Dorsolateral prefrontal cortex (tissue), 120 donors: ENCODE measurements at regions of chr6 and their contacts with region 1.

Region 1: GRCh38 chr6:52517502-52518278 is 59.2 kb downstream of the TRAM2 start:
- DNase-seq: peak in 9 of 10 donors; percentile 50 to 95 (median 82)
- H3K4me3 ChIP-seq: peak overlapping the region in 36 of 59 donors; percentile 2 to 49 (median 24)
- H3K27ac ChIP-seq: peak overlapping the region; percentile 32 to 98 (median 84)
- H3K27me3 ChIP-seq: no peaks in the 10 kb centered on the region
- CTCF ChIP-seq: peak in 4 of 56 donors; percentile 10 to 30 (median 22)

Region 2: DNA sequence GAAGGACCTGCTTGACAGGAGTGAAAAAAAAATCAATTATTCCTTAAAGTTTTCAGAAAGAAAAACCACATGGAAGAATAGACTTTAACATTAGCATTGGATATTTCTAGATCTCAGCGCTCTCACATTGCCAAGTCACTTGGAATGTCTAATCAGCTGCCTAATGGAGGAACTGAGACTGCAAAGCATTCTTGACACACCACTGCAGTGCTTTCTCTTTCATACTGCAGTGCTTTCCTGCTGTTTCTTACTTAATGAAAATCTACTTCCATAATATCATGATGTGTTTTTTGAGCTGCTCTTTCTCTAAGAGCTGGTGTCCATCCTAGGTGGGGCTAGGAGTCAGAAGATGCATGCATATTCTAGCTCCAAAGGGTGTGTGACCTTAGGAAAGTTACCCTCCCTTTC is 212.7 kb before region 1 on chr6:
- intact Hi-C with region 1: no loop called
- DNase-seq: no peak
- H3K4me3 ChIP-seq: peak overlapping the region in 3 of 59 donors; percentile 6 to 12 (median 9)
- H3K27ac ChIP-seq: peak overlapping the region in 52 of 59 donors; percentile 1 to 84 (median 56)
- H3K27me3 ChIP-seq: no peaks in the 10 kb centered on the region
- CTCF ChIP-seq: no peak

Region 3: DNA sequence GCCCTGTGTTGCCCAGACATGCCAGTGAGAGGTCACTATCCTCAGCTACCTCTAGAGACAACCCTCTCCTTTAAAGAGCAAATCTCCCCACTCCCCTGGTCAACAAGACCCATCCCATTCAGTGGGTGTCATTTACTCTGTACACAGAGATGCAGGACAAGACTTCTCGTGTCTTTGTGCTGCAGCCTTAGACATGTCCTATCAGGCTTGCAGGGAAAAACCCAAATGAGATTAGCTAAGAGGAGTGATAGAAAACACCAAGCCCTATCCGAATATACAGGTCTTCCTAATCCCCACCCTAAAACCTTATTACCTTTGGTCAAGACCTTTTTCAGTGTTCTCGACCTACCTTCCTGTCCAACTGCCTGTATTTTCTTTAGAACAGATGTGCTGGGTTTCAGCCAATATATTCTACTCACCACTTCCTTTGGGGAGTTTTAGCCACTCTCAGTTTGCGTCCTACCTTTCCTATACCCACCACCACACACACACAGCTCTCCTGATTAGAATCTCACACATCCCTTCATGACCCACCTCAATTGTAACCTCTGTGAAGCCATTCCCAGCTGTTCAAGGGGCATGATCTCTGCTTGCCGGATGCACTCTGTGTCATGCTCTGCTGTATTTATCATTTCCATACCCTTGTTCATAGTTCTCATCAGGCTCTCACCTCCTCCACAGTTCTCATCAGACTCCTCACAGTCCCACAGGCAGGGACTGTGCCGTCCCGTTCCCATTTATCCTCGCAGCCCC is 19.5 kb after region 1 on chr6:
- intact Hi-C with region 1: no loop called
- DNase-seq: no peak
- H3K4me3 ChIP-seq: no peak overlapping the region
- H3K27ac ChIP-seq: no peak overlapping the region
- H3K27me3 ChIP-seq: no peaks in the 10 kb centered on the region
- CTCF ChIP-seq: no peak

Region 4: GRCh38 chr6:52577022-52577777 is 59.5 kb after region 1 on chr6 and contains the start of gene TRAM2:
- intact Hi-C with region 1: loop called (anchors 5 kb)
- DNase-seq: peak; percentile 39 to 86 (median 63)
- H3K4me3 ChIP-seq: peak within 1 kb of the TSS; percentile 57 to 97 (median 86)
- H3K27ac ChIP-seq: peak within 1 kb of the TSS; percentile 46 to 98 (median 93)
- H3K27me3 ChIP-seq: no peaks in the 10 kb centered on the region
- CTCF ChIP-seq: peak in 18 of 56 donors; percentile 5 to 35 (median 14)
- total RNA-seq, gene TRAM2: 2.9 to 8.9 (median 5.2) TPM

Region 5: GRCh38 chr6:52598123-52598823 is 80.6 kb after region 1 on chr6:
- intact Hi-C with region 1: loop called in 1 of 2 experiments (anchors 5 kb)
- DNase-seq: peak in 6 of 10 donors; percentile 20 to 60 (median 44)
- H3K4me3 ChIP-seq: peak overlapping the region in 52 of 59 donors; percentile 1 to 61 (median 40)
- H3K27ac ChIP-seq: peak overlapping the region in 3 of 59 donors; percentile 25 to 64 (median 27)
- H3K27me3 ChIP-seq: no peaks in the 10 kb centered on the region
- CTCF ChIP-seq: peak; percentile 33 to 82 (median 66)

Region 6: GRCh38 chr6:52650941-52651340 is 133.3 kb after region 1 on chr6:
- intact Hi-C with region 1: loop called in 1 of 2 experiments (anchors 5 kb)
- DNase-seq: no peak
- H3K4me3 ChIP-seq: no peak overlapping the region
- H3K27ac ChIP-seq: no peak overlapping the region
- H3K27me3 ChIP-seq: peaks cover 0 to 12% (median 0%) of the 10 kb centered on the region in 45 donors
- CTCF ChIP-seq: no peak